ENCODE measurements at regions of chr17 and their contacts with region 1.

Region 1: GRCh38 chr17:76014184-76014924 is 12.8 kb downstream of the EVPL start:
- DNase-seq: peak; percentile 83 to 89
- H3K4me3 ChIP-seq: no peak overlapping the region
- H3K27ac ChIP-seq: no peak overlapping the region
- H3K4me1 ChIP-seq: peaks cover 0 to 2% (median under 1%) of the 10 kb centered on the region in 4 experiments; a peak in 3 of 7 replicates
- H3K27me3 ChIP-seq: no peaks in the 10 kb centered on the region; a peak in 1 of 7 replicates
- CTCF ChIP-seq: peak; percentile 88 to 99 (median 96)
- EP300 ChIP-seq: peak in 1 of 2 experiments; percentile 65; a peak in 1 of 3 replicates
- POLR2A ChIP-seq: no peak
- RAD21 ChIP-seq: peak; percentile 93 to 97

Region 2: GRCh38 chr17:76027159-76027839 is 12.9 kb after region 1 on chr17 and contains the start of gene EVPL:
- CTCF ChIA-PET with region 1: interaction called, 229 read pairs
- POLR2A ChIA-PET with region 1: interaction called, 6 read pairs
- DNase-seq: no peak
- H3K4me3 ChIP-seq: no peak within 1 kb of the TSS
- H3K27ac ChIP-seq: no peak within 1 kb of the TSS
- H3K4me1 ChIP-seq: peaks cover 0 to 12% (median 4%) of the 10 kb centered on the region in 4 experiments; a peak in 6 of 7 replicates
- H3K27me3 ChIP-seq: no peaks in the 10 kb centered on the region
- CTCF ChIP-seq: no peak
- EP300 ChIP-seq: no peak
- POLR2A ChIP-seq: no peak
- RAD21 ChIP-seq: no peak
- total RNA-seq, gene EVPL: 0.75 and 0.99 TPM in 2 replicates

Region 3: GRCh38 chr17:76053246-76054116 is 39.1 kb after region 1 on chr17:
- CTCF ChIA-PET with region 1: interaction called, 13 read pairs
- POLR2A ChIA-PET with region 1: no interaction called
- DNase-seq: no peak
- H3K4me3 ChIP-seq: no peak overlapping the region
- H3K27ac ChIP-seq: peak overlapping the region; percentile 19; the same call in 1 of the 2 replicates
- H3K4me1 ChIP-seq: peaks cover 0 to 2% (median 0%) of the 10 kb centered on the region in 4 experiments; a peak in 1 of 7 replicates
- H3K27me3 ChIP-seq: no peaks in the 10 kb centered on the region
- CTCF ChIP-seq: no peak
- EP300 ChIP-seq: no peak
- POLR2A ChIP-seq: no peak
- RAD21 ChIP-seq: no peak

Region 4: DNA sequence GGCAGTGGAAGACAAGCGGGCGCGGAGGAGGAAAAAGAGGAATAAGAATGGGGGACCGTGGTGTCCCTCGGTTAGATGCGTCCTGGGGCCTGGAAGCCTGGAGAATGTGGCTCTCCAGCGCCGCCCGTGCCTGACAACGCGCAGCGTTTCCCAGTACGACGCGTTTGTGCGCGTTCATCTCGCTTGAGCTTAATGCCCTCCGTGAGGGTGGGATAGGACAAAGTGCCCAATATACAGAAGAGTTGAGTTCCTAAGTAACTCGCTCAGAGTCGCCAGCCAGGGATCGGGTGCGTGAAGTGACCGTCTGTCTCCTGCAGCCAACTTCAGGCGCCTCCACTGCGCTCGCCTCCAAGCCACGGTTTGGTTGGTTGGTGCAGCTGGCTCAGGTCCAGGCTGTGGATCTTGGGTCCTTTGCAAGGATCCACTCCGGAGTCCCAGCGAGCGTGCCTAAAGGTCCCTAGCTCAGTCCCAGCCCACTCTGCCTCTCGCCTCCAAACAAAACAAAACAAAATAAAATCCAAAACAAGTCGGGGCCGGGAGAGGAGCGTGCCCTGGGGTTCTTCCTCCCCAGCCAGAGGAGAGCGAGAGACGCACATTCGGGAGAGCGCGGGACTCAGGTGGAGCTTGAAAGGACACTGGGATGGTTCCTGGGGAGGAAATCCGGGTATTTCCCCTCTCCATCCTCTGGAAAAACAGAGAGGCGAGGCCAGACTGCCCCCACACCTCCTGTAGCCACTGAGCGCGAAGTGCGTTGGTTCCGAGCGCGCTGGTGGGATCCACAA is 61.2 kb after region 1 on chr17:
- CTCF ChIA-PET with region 1: interaction called, 36 read pairs
- POLR2A ChIA-PET with region 1: interaction called, 9 read pairs
- DNase-seq: peak in 1 of 2 experiments; percentile 81
- H3K4me3 ChIP-seq: peak overlapping the region; percentile 21 to 60 (median 40); a peak in 5 of 8 replicates
- H3K27ac ChIP-seq: no peak overlapping the region
- H3K4me1 ChIP-seq: peaks cover 0 to 54% (median 36%) of the 10 kb centered on the region in 4 experiments; a peak in 6 of 7 replicates
- H3K27me3 ChIP-seq: peaks cover 54 to 72% (median 68%) of the 10 kb centered on the region in 4 experiments
- CTCF ChIP-seq: peak; percentile 31 to 75 (median 68)
- EP300 ChIP-seq: no peak
- POLR2A ChIP-seq: no peak
- RAD21 ChIP-seq: peak; percentile 33 to 40; a peak in 3 of 4 replicates

Region 5: DNA sequence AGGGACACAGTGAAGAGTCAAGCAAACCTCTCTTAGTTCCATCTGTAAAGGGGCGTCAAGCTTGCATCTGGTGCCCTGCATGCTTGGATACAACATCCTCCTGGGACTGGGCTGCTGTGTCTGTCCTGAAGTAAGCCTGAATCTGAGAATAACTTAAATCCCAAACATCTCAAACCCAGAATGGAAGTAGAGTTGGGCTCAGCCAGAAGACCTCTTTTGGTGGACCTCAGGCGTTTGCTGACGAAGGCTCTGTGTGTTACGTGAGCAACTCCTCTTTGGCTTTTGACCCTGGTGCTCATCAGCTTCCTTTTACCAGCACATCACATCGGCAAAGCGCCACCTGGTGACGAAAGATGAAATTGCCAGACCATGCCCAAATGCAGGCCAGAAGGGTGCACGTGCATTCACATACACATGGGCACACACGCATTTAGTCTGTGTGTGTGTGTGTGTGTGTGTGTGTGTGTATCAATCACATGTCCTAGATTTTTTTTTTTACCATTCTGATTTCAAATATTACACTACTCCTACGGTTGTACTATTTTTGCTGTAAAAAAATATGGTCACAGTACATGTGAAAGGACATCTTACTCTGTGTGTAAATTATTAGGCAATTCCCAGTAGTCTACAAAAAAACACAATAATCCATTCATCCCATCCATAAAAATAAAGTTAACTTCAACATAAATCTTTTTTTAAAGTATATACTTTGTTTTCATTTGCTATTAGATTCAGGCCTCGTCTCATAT is 167.8 kb after region 1 on chr17:
- CTCF ChIA-PET with region 1: interaction called, 12 read pairs
- POLR2A ChIA-PET with region 1: no interaction called
- DNase-seq: peak; percentile 82 to 99
- H3K4me3 ChIP-seq: no peak overlapping the region
- H3K27ac ChIP-seq: no peak overlapping the region
- H3K4me1 ChIP-seq: peaks cover 0 to 2% (median 0%) of the 10 kb centered on the region in 4 experiments; a peak in 2 of 7 replicates
- H3K27me3 ChIP-seq: no peaks in the 10 kb centered on the region; a peak in 1 of 7 replicates
- CTCF ChIP-seq: peak; percentile 86 to 98 (median 97)
- EP300 ChIP-seq: no peak
- POLR2A ChIP-seq: no peak
- RAD21 ChIP-seq: peak; percentile 80 to 87